CD14-positive monocyte (primary cell): ENCODE measurements at regions of chr17 and their contacts with region 1.

Region 1: DNA sequence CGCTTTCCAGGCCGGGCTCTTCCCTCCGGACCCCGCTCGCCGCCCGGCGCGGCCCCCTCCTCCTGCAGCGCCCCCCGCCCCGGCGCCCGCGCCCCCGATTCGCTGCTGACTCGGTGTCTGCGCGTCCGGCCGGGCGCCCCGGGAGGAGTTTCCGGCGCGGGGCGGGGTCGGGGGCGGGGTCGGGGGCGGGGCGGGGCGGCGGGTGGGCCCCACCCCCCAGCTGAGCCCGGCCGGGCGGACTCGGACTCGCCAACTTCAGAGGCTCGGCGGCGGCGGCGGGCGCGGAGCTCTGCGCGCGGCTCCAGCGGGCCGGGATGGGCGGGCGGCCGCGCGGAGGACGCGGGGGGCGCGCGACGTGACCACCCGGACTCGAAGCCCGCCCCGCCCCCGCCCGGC is at the start of gene METRNL:
- DNase-seq: peak; percentile 60 to 80 (median 62)
- H3K4me3 ChIP-seq: peak within 1 kb of the TSS; percentile 58 to 89 (median 75)
- H3K4me3 Mint-ChIP-seq: peak within 1 kb of the TSS; percentile 68 to 81
- H3K27ac ChIP-seq: peak within 1 kb of the TSS in 1 of 2 donors; percentile 84
- H3K27ac Mint-ChIP-seq: peak within 1 kb of the TSS in 3 of 7 donors; percentile 30 to 82 (median 42)
- H3K4me1 ChIP-seq: peaks cover 38% of the 10 kb centered on the region in 2 donors
- H3K4me1 Mint-ChIP-seq: peaks cover 37% of the 10 kb centered on the region
- H3K27me3 ChIP-seq: peaks cover 2 to 17% of the 10 kb centered on the region in 2 donors
- H3K27me3 Mint-ChIP-seq: peaks cover 22 to 31% (median 29%) of the 10 kb centered on the region in 3 donors
- CTCF ChIP-seq: no peak
- polyA plus RNA-seq, gene METRNL: 13.1 to 133 (median 29.8) TPM

Region 2: GRCh38 chr17:82494236-82495055 is 584.9 kb before region 1 on chr17:
- intact Hi-C with region 1: no loop called
- DNase-seq: peak; percentile 77 to 90 (median 83)
- H3K4me3 ChIP-seq: no peak overlapping the region
- H3K4me3 Mint-ChIP-seq: peak overlapping the region in 1 of 2 donors; percentile 12
- H3K27ac ChIP-seq: peak overlapping the region; percentile 32 to 44
- H3K27ac Mint-ChIP-seq: peak overlapping the region; percentile 21 to 82 (median 53)
- H3K4me1 ChIP-seq: peaks cover 23 to 30% of the 10 kb centered on the region in 2 donors
- H3K4me1 Mint-ChIP-seq: peaks cover 30% of the 10 kb centered on the region
- H3K27me3 ChIP-seq: no peaks in the 10 kb centered on the region
- H3K27me3 Mint-ChIP-seq: peaks cover 0 to 7% (median 0%) of the 10 kb centered on the region in 3 donors
- CTCF ChIP-seq: peak; percentile 82

Region 3: DNA sequence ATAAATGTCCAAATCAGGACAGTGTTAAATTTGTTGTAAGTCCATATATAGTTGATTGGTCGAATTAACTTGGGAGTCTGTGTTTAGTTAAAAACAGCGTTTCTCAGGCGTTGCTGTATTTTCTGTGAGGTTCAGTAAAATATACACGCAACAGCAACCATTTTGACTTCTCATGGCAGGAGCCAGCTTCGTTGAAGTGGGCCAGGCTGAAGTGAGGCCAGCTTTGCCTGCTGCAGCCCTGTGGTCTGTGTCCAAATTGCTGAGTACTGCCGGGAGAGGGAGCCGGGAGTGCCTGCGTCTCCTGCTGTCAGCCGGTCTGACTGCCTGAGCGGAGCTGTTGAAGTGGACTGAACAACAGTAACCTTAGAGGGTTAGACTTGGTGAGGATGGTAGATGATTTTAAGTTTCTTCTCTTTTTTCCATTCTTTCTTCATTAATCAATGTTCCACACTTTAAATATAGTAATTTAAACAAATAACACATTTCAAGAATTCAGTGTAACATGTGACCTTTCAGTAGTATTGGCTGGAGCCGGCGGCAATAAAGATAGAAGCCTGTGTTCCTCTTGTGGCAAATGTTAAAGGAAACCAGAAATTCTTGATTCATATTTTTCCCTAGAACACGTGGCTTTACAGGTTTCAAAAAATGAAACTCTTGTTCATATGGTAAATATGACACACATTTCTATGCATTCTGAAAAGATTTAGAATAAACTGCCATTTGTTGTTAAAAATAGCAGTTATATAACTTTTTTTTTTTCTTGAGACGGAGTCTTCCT is 202.6 kb before region 1 on chr17:
- intact Hi-C with region 1: no loop called
- DNase-seq: peak in 2 of 3 donors; percentile 33 to 36
- H3K4me3 ChIP-seq: peak overlapping the region in 1 of 3 experiments; percentile 39
- H3K4me3 Mint-ChIP-seq: no peak overlapping the region
- H3K27ac ChIP-seq: peak overlapping the region; percentile 11 to 42
- H3K27ac Mint-ChIP-seq: peak overlapping the region; percentile 44 to 87 (median 69)
- H3K4me1 ChIP-seq: peaks cover 69 to 83% of the 10 kb centered on the region in 2 donors
- H3K4me1 Mint-ChIP-seq: peaks cover 82% of the 10 kb centered on the region
- H3K27me3 ChIP-seq: no peaks in the 10 kb centered on the region
- H3K27me3 Mint-ChIP-seq: peaks cover 0 to 2% (median 1%) of the 10 kb centered on the region in 3 donors
- CTCF ChIP-seq: no peak

Region 4: DNA sequence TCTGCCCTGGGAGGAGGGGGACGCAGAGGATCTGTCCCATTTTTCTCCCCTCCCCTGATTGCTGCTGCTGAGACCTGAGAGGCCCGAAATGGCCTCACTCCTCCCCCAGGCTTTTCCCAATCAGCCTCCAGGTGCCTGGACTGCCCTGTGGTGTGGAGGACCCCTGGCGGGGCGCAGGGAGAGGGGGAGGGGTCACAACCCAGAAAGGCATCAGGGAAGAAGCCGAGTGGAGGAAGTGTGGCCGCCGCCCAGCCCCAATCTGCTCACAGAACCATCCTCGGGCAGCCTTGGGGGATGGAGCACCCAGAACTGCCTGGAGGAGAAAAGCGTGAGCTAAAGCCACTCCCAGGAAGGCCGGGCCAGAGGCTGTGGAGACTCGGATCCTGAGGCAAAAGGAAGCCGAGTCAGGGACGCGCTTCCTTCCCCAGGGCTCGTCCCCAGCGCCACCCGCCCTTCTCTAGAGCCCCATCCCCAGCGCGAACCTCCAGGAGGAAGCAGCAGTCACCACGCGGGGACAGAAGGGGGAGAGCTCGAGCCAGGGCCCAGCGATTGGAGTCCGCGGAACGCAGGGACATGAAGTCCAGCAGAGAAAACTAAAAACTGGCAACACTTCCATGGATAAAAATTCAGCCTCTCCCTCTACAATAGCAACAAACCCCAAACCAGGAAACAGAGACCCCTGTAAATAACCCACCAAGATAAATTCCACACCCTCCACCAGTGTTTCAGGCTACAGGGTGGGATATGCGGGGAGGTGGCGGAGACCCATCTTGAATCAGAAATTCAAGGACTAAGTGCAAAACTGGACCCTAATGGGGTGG is 116.3 kb before region 1 on chr17:
- intact Hi-C with region 1: loop called (anchors 2 to 5 kb)
- DNase-seq: peak; percentile 80 to 82 (median 81)
- H3K4me3 ChIP-seq: peak overlapping the region in 2 of 3 experiments; percentile 4 to 70
- H3K4me3 Mint-ChIP-seq: peak overlapping the region; percentile 71 to 83
- H3K27ac ChIP-seq: peak overlapping the region; percentile 10 to 59
- H3K27ac Mint-ChIP-seq: peak overlapping the region; percentile 33 to 91 (median 65)
- H3K4me1 ChIP-seq: peaks cover 14 to 19% of the 10 kb centered on the region in 2 donors
- H3K4me1 Mint-ChIP-seq: peaks cover 31% of the 10 kb centered on the region
- H3K27me3 ChIP-seq: no peaks in the 10 kb centered on the region
- H3K27me3 Mint-ChIP-seq: no peaks in the 10 kb centered on the region
- CTCF ChIP-seq: peak; percentile 86

Region 5: DNA sequence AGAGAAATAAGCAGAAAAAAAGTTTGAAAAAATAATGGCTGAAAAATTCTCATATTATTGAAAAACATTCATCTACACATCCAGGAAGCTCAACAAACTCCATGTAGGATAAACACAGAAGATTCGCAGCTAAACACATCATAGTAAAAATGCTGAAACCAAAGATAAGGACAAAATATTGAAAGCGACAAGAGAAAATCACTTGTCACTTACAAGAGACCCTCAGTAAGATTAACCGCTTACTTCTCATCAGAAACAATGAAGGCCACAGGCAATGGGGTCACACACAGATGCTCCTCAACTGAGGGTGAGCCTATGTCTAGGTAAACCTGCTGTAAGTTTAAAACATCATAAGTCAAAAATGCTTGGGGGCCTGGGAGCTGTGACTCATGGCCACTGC is 38.0 kb before region 1 on chr17:
- intact Hi-C with region 1: loop called in 1 of 2 experiments (anchors 5 kb)
- DNase-seq: no peak
- H3K4me3 ChIP-seq: peak overlapping the region in 1 of 3 experiments; percentile 4
- H3K4me3 Mint-ChIP-seq: no peak overlapping the region
- H3K27ac ChIP-seq: no peak overlapping the region
- H3K27ac Mint-ChIP-seq: peak overlapping the region in 3 of 7 donors; percentile 2 to 26 (median 14)
- H3K4me1 ChIP-seq: peaks cover 3 to 8% of the 10 kb centered on the region in 2 donors
- H3K4me1 Mint-ChIP-seq: peaks cover 3% of the 10 kb centered on the region
- H3K27me3 ChIP-seq: no peaks in the 10 kb centered on the region
- H3K27me3 Mint-ChIP-seq: no peaks in the 10 kb centered on the region
- CTCF ChIP-seq: no peak

Region 6: DNA sequence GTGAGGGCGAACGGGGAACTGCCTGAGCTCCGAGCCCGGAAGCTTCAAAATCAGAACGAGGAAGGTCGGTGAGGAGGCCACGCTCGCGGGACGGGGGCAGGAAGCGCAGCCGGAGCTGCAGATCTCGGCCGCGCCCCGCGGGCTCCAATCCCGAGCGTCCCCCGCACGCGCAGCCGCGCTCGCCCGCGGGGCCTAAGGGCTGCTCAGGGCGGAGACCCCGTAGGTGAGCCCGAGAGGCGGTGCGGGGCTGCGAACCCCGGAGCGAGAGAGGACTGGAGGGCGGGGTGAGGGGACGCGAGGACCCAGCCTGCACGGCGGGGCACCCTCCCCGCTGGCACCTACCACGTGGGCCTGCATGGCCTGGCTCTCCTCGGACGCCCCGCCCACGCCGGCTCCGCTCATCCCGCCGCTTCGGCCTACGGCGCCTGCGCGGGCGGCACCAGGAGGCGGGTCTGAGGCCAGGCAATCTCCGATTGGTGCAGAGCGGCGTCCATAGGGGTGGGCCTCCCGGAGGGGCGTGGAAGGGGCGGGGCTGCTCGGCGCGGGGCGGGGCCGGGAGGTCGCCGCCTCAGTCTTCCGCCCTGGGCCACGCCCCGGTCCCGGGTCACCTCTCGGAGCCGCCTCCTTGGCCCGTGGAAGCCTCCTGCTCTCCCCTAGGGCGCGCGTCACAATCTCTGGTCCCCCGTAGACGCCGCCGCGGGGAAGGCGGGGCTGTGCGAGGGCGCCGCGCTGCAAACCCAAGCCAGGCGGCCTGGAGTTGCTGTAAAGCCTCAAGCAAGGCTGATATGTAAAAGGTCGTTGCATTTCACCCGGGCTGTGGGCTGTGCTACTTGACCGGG is 27.7 kb before region 1 on chr17:
- intact Hi-C with region 1: loop called (anchors 2 kb)
- DNase-seq: peak; percentile 97 to 98 (median 97)
- H3K4me3 ChIP-seq: peak overlapping the region; percentile 29 to 74 (median 41)
- H3K4me3 Mint-ChIP-seq: peak overlapping the region; percentile 65 to 74
- H3K27ac ChIP-seq: peak overlapping the region; percentile 91 to 94
- H3K27ac Mint-ChIP-seq: peak overlapping the region; percentile 89 to 99 (median 98)
- H3K4me1 ChIP-seq: peaks cover 64 to 80% of the 10 kb centered on the region in 2 donors
- H3K4me1 Mint-ChIP-seq: peaks cover 60% of the 10 kb centered on the region
- H3K27me3 ChIP-seq: no peaks in the 10 kb centered on the region
- H3K27me3 Mint-ChIP-seq: peaks cover 0 to 9% (median 1%) of the 10 kb centered on the region in 3 donors
- CTCF ChIP-seq: no peak

Region 7: GRCh38 chr17:83067221-83068048 is 11.9 kb before region 1 on chr17:
- intact Hi-C with region 1: no loop called
- DNase-seq: no peak
- H3K4me3 ChIP-seq: no peak overlapping the region
- H3K4me3 Mint-ChIP-seq: no peak overlapping the region
- H3K27ac ChIP-seq: no peak overlapping the region
- H3K27ac Mint-ChIP-seq: peak overlapping the region in 2 of 7 donors; percentile 66 to 80
- H3K4me1 ChIP-seq: peaks cover 17 to 18% of the 10 kb centered on the region in 2 donors
- H3K4me1 Mint-ChIP-seq: peaks cover 24% of the 10 kb centered on the region
- H3K27me3 ChIP-seq: peaks cover 0 to 2% of the 10 kb centered on the region in 2 donors
- H3K27me3 Mint-ChIP-seq: peaks cover 5 to 24% (median 7%) of the 10 kb centered on the region in 3 donors
- CTCF ChIP-seq: no peak

Region 8: GRCh38 chr17:83119987-83120864 is 40.9 kb after region 1 on chr17:
- intact Hi-C with region 1: loop called in 1 of 2 experiments (anchors 5 kb)
- DNase-seq: peak; percentile 77 to 89 (median 87)
- H3K4me3 ChIP-seq: peak overlapping the region in 1 of 3 experiments; percentile 52
- H3K4me3 Mint-ChIP-seq: peak overlapping the region; percentile 11 to 77
- H3K27ac ChIP-seq: no peak overlapping the region
- H3K27ac Mint-ChIP-seq: peak overlapping the region in 6 of 7 donors; percentile 15 to 77 (median 66)
- H3K4me1 ChIP-seq: peaks cover 59 to 69% of the 10 kb centered on the region in 2 donors
- H3K4me1 Mint-ChIP-seq: peaks cover 73% of the 10 kb centered on the region
- H3K27me3 ChIP-seq: peaks cover 0 to 6% of the 10 kb centered on the region in 2 donors
- H3K27me3 Mint-ChIP-seq: peaks cover 33 to 39% (median 35%) of the 10 kb centered on the region in 3 donors
- CTCF ChIP-seq: no peak